H1 (cell line): ENCODE measurements at regions of chr2 and their contacts with region 1.

Region 1: GRCh38 chr2:205903638-205904037 is 182.3 kb downstream of the INO80D start:
- DNase-seq: no peak
- H3K4me3 ChIP-seq: no peak overlapping the region
- H3K27ac ChIP-seq: no peak overlapping the region
- H3K4me1 ChIP-seq: no peaks in the 10 kb centered on the region
- H3K27me3 ChIP-seq: no peaks in the 10 kb centered on the region
- CTCF ChIP-seq: peak; percentile 69 to 83 (median 70)
- EP300 ChIP-seq: no peak
- POLR2A ChIP-seq: no peak
- RAD21 ChIP-seq: peak; percentile 58 to 66

Region 2: GRCh38 chr2:205800773-205801172 is 102.9 kb before region 1 on chr2:
- CTCF ChIA-PET with region 1: no interaction called
- POLR2A ChIA-PET with region 1: no interaction called
- DNase-seq: no peak
- H3K4me3 ChIP-seq: no peak overlapping the region
- H3K27ac ChIP-seq: no peak overlapping the region
- H3K4me1 ChIP-seq: peaks cover 0 to 14% (median 4%) of the 10 kb centered on the region in 4 experiments; a peak in 4 of 7 replicates
- H3K27me3 ChIP-seq: no peaks in the 10 kb centered on the region
- CTCF ChIP-seq: no peak
- EP300 ChIP-seq: no peak
- POLR2A ChIP-seq: no peak
- RAD21 ChIP-seq: no peak

Region 3: GRCh38 chr2:205848601-205849000 is 55.0 kb before region 1 on chr2:
- CTCF ChIA-PET with region 1: no interaction called
- POLR2A ChIA-PET with region 1: no interaction called
- DNase-seq: no peak
- H3K4me3 ChIP-seq: no peak overlapping the region
- H3K27ac ChIP-seq: no peak overlapping the region
- H3K4me1 ChIP-seq: peaks cover 0 to 5% (median under 1%) of the 10 kb centered on the region in 4 experiments; a peak in 1 of 7 replicates
- H3K27me3 ChIP-seq: no peaks in the 10 kb centered on the region
- CTCF ChIP-seq: no peak
- EP300 ChIP-seq: no peak
- POLR2A ChIP-seq: no peak
- RAD21 ChIP-seq: no peak

Region 4: GRCh38 chr2:205885492-205886099 is 18.0 kb before region 1 on chr2:
- CTCF ChIA-PET with region 1: interaction called, 16 read pairs
- POLR2A ChIA-PET with region 1: no interaction called
- DNase-seq: peak; percentile 82 to 98
- H3K4me3 ChIP-seq: no peak overlapping the region
- H3K27ac ChIP-seq: no peak overlapping the region
- H3K4me1 ChIP-seq: peaks cover 0 to 5% (median 0%) of the 10 kb centered on the region in 4 experiments; a peak in 2 of 7 replicates
- H3K27me3 ChIP-seq: no peaks in the 10 kb centered on the region
- CTCF ChIP-seq: peak; percentile 85 to 99 (median 94)
- EP300 ChIP-seq: no peak
- POLR2A ChIP-seq: no peak
- RAD21 ChIP-seq: peak; percentile 98 to 99

Region 5: DNA sequence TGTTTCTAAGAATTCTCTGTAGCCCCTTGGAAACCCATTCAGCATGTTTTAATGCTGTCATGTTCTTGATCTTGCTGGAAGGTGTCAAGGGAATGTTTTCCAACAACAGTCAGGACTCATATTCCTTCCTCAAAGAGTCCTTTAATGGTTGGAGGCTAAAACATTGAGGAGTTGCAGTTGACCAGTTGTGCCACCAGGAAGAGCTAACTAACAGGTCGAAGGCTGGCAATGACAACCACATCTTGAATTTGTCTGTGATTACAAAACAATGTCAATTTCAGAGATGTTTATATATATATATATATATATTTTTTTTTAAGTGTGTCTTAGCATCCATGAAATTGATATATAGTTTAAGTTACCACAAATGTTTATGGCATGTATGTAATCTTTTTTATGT is 30.8 kb after region 1 on chr2:
- CTCF ChIA-PET with region 1: interaction called, 83 read pairs
- POLR2A ChIA-PET with region 1: no interaction called
- DNase-seq: no peak
- H3K4me3 ChIP-seq: no peak overlapping the region
- H3K27ac ChIP-seq: no peak overlapping the region
- H3K4me1 ChIP-seq: peaks cover 0 to 9% (median 2%) of the 10 kb centered on the region in 4 experiments; a peak in 4 of 7 replicates
- H3K27me3 ChIP-seq: no peaks in the 10 kb centered on the region
- CTCF ChIP-seq: peak in 2 of 3 experiments; percentile 36 to 52; a peak in 2 of 4 replicates
- EP300 ChIP-seq: no peak
- POLR2A ChIP-seq: no peak
- RAD21 ChIP-seq: peak; percentile 50 to 51

Region 6: GRCh38 chr2:205947621-205948495 is 44.2 kb after region 1 on chr2:
- CTCF ChIA-PET with region 1: interaction called, 16 read pairs
- POLR2A ChIA-PET with region 1: no interaction called
- DNase-seq: peak; percentile 21 to 88
- H3K4me3 ChIP-seq: no peak overlapping the region
- H3K27ac ChIP-seq: no peak overlapping the region
- H3K4me1 ChIP-seq: peaks cover 0 to 3% (median 0%) of the 10 kb centered on the region in 4 experiments; a peak in 1 of 7 replicates
- H3K27me3 ChIP-seq: no peaks in the 10 kb centered on the region
- CTCF ChIP-seq: peak; percentile 83 to 93 (median 90)
- EP300 ChIP-seq: no peak
- POLR2A ChIP-seq: no peak
- RAD21 ChIP-seq: peak; percentile 90 to 94